Tibial artery (tissue), 4 donors: ENCODE measurements at regions of chr2 and their contacts with region 1.

Region 1: GRCh38 chr2:212451786-212452231 is 86.8 kb downstream of the ERBB4 start:
- DNase-seq: no peak
- H3K4me3 ChIP-seq: no peak overlapping the region
- H3K27ac ChIP-seq: no peak overlapping the region
- H3K4me1 ChIP-seq: peaks cover 0 to 31% (median 7%) of the 10 kb centered on the region in 4 donors
- H3K27me3 ChIP-seq: no peaks in the 10 kb centered on the region
- CTCF ChIP-seq: no peak

Region 2: DNA sequence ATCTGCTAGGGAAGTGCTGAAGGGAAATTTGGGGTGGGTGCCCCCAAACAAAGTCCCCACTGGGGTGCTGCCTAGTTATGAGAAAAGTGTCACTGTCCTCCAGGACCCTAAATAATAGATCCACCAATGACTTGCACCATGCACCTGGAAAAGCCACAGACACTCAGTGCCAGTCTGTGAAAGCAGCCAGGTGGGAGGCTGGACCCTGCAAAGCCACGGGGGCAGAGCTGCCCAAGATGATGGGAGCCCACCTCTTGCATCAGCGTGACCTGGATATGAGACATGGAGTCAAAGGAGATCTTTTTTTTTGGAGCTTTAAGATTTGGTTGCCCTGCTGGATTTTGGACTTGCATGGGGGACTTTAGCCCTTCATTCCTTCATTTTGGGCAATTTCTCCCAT is 344.8 kb before region 1 on chr2:
- intact Hi-C with region 1: loop called (anchors 2 kb)
- DNase-seq: no peak
- H3K4me3 ChIP-seq: no peak overlapping the region
- H3K27ac ChIP-seq: no peak overlapping the region
- H3K4me1 ChIP-seq: no peaks in the 10 kb centered on the region
- H3K27me3 ChIP-seq: no peaks in the 10 kb centered on the region
- CTCF ChIP-seq: no peak